ENCODE measurements at regions of chr20 and their contacts with region 1.

Region 1: DNA sequence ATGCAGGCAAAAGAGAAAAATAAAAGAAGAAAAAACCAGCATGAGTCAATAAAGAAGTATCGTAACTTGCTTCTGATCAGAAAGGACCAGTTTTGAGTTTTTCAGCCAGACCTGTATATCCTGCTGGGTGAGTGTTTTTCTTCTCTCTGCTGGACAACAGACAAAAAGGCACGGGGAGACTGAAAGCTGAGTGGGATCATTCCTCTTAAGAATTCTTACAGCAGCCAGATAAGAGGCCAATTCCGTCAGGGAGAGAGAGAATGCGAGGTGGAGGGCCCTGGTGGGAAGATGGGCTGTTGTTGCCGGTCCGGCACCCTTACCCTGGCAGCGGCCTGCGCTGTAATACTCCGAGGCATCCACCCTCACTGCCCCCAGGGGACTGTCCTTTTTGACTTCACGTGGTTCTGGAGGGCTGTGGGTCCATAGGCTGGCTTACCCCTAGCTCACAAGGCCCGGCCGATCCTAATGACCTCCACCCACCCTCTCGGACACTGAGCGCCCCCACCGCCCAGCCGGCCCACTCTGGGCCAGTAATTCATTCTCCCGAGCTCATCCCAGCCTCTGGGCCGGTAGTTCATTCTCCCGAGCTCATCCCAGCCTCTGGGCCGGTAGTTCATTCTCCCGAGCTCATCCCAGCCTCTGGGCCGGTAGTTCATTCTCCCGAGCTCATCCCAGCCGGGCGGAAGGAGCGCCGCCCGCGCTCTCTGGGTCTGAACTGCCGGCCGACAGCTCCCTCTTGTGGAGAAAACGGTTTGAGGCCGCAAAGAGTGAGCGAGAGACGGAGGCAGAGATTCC is 118.3 kb upstream of the SIRPA start:
- DNase-seq: peak; percentile 83
- H3K4me3 Mint-ChIP-seq: peak overlapping the region; percentile 72
- H3K27ac Mint-ChIP-seq: no peak overlapping the region
- H3K4me1 Mint-ChIP-seq: peaks cover 12% of the 10 kb centered on the region
- H3K27me3 Mint-ChIP-seq: peaks cover 12% of the 10 kb centered on the region

Region 2: GRCh38 chr20:1094751-1095150 is 682.1 kb before region 1 on chr20:
- CTCF ChIA-PET with region 1: no interaction called
- POLR2A ChIA-PET with region 1: no interaction called
- DNase-seq: no peak
- H3K4me3 Mint-ChIP-seq: no peak overlapping the region
- H3K27ac Mint-ChIP-seq: no peak overlapping the region
- H3K4me1 Mint-ChIP-seq: no peaks in the 10 kb centered on the region
- H3K27me3 Mint-ChIP-seq: no peaks in the 10 kb centered on the region

Region 3: DNA sequence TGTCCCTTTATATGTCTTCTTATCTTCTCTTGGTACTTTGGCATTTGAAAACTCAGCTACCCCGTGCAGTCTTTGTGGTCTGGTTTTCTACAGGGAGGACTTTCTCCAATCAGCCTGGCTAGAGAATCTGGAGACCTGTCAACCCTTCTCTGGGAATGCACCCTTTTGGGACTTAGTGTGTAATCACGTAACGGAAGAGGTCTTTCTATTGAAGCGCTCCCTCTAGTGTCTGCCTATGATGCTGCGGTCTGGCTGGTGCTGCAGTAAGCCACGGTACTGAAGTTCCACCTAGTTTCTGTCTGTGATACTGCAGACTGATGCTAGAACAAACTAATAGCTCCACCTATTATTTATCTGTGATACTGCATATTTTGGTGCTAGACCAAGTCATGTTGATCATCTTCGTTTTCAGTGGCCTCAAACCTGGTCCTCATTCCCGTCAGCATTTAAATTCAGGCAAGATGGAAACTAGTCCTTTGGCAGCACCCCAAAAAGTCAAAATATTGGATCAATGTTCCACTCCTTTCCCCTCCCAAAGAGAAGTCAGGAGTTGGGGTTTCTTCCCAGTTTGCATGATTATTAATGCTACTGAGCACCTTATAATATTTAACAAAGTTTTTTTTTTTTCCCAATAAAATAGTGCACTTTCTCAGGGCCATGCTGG is 273.2 kb before region 1 on chr20:
- CTCF ChIA-PET with region 1: interaction called, 48 read pairs
- POLR2A ChIA-PET with region 1: no interaction called
- DNase-seq: peak; percentile 77
- H3K4me3 Mint-ChIP-seq: no peak overlapping the region
- H3K27ac Mint-ChIP-seq: no peak overlapping the region
- H3K4me1 Mint-ChIP-seq: peaks cover 3% of the 10 kb centered on the region
- H3K27me3 Mint-ChIP-seq: peaks cover 58% of the 10 kb centered on the region

Region 4: GRCh38 chr20:1533059-1533458 is 243.8 kb before region 1 on chr20:
- CTCF ChIA-PET with region 1: interaction called, 21 read pairs
- POLR2A ChIA-PET with region 1: no interaction called
- DNase-seq: no peak
- H3K4me3 Mint-ChIP-seq: no peak overlapping the region
- H3K27ac Mint-ChIP-seq: no peak overlapping the region
- H3K4me1 Mint-ChIP-seq: no peaks in the 10 kb centered on the region
- H3K27me3 Mint-ChIP-seq: peaks cover 15% of the 10 kb centered on the region

Region 5: GRCh38 chr20:1555952-1556351 is 220.9 kb before region 1 on chr20:
- CTCF ChIA-PET with region 1: interaction called, 22 read pairs
- POLR2A ChIA-PET with region 1: no interaction called
- DNase-seq: no peak
- H3K4me3 Mint-ChIP-seq: no peak overlapping the region
- H3K27ac Mint-ChIP-seq: no peak overlapping the region
- H3K4me1 Mint-ChIP-seq: peaks cover 3% of the 10 kb centered on the region
- H3K27me3 Mint-ChIP-seq: no peaks in the 10 kb centered on the region

Region 6: GRCh38 chr20:1669304-1669703 is 107.6 kb before region 1 on chr20:
- CTCF ChIA-PET with region 1: no interaction called
- POLR2A ChIA-PET with region 1: no interaction called
- DNase-seq: no peak
- H3K4me3 Mint-ChIP-seq: no peak overlapping the region
- H3K27ac Mint-ChIP-seq: no peak overlapping the region
- H3K4me1 Mint-ChIP-seq: peaks cover 76% of the 10 kb centered on the region
- H3K27me3 Mint-ChIP-seq: no peaks in the 10 kb centered on the region

Region 7: GRCh38 chr20:1802385-1803060 is 25.6 kb after region 1 on chr20:
- CTCF ChIA-PET with region 1: interaction called, 11 read pairs
- POLR2A ChIA-PET with region 1: no interaction called
- DNase-seq: peak; percentile 30
- H3K4me3 Mint-ChIP-seq: peak overlapping the region; percentile 26
- H3K27ac Mint-ChIP-seq: no peak overlapping the region
- H3K4me1 Mint-ChIP-seq: peaks cover 10% of the 10 kb centered on the region
- H3K27me3 Mint-ChIP-seq: peaks cover 61% of the 10 kb centered on the region

Region 8: DNA sequence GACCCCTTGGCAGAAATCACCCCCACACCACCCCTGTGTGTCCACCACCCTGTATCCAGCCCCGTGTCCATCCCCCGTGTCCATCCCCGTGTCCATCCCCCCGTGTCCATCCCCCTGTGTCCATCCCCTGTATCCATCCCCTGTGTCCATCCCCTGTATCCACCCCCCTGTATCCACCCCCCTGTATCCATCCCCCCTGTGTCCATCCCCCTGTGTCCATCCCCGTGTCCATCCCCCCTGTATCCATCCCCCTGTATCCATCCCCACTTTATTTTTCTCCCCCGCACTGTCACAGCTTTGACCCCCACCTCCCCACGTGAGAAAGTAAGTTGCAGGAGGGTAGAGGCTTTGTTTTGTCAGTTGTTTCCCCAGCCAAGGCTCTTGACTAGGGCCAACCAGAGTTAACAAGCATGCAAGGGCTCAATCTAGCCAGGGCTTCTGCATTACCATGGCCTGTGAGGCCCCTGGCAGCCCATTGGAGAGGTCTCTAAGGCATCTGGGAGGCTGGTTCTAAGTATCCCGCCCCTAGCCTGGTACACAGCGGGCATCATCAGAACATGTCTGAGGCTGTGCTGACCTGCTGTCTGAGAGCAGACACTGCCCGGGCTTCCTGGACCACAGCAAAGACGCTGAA is 100.2 kb after region 1 on chr20:
- CTCF ChIA-PET with region 1: no interaction called
- POLR2A ChIA-PET with region 1: no interaction called
- DNase-seq: no peak
- H3K4me3 Mint-ChIP-seq: no peak overlapping the region
- H3K27ac Mint-ChIP-seq: no peak overlapping the region
- H3K4me1 Mint-ChIP-seq: no peaks in the 10 kb centered on the region
- H3K27me3 Mint-ChIP-seq: no peaks in the 10 kb centered on the region